ENCODE measurements at regions of chr3 and their contacts with region 1.

Region 1: DNA sequence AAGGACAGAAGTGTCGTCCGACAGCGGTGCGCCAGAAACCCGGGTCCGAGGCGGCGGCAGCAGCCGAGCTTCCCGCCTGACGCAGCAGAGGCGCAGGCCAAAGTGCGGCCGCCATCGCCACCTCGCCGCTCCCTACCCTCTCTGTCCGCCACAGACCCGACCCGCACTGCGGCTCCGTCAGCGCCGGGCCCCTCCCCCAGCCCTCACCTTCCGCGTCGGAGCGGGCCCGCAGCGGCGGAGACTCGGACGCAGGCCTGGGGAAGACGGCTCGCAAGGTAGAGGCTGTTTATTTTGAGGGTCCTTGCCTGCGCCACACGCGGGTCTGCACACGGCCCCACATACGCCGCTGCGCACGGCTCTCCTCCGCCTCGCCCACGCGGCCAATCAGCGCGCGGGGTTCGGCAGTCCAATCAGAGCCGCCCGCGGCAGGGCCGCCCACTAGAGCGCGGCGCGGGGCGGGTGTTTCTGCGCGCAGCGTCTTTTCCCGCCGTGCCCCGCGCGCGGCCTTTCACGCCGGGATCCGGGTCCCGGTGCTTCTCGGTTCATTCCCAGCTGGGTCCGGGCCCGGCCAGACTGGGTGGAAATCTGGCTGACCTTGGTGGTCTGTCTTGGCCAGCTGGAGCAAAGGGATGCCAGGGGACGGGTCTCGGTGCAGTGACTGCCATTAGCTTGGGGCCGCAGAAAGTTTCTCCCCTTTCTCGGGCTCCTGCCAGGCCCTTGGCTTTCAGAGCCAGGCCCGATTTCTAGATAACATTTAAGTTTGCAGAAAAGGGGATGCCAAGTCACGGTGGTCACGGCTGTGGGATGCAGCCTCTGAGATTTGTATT is at the start of gene CNBP:
- DNase-seq: peak; percentile 91 to 95 (median 92)
- ATAC-seq: peak; percentile 95
- H3K4me3 ChIP-seq: peak within 1 kb of the TSS; percentile 73
- H3K27ac ChIP-seq: peak within 1 kb of the TSS; percentile 99
- H3K4me1 ChIP-seq: peaks cover 15 to 16% of the 10 kb centered on the region in 2 experiments; a peak in 4 of 5 replicates
- H3K27me3 ChIP-seq: no peaks in the 10 kb centered on the region
- CTCF ChIP-seq: no peak
- EP300 ChIP-seq: no peak
- POLR2A ChIP-seq: peak; percentile 97
- RAD21 ChIP-seq: no peak
- polyA plus RNA-seq, gene CNBP: 708 to 717 TPM

Region 2: DNA sequence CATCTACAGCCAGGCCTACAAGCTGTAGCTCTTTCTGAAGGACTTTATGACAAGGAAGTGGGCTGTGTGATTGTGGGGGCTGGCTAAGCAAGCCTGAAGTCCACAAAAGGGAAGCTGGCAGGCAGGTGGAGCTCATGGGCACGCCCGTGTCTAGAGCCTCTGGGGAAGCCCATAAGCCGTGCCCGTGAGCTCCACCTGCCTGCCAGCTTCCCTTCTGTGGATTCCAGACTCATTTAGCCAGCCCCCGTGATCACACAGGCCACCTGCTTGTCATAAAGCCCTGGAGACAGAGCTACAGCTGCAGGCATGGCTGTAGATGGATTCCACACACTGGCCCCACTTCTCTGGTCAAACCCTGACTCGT is 167.4 kb before region 1 on chr3:
- CTCF ChIA-PET with region 1: no interaction called
- POLR2A ChIA-PET with region 1: no interaction called
- in situ Hi-C with region 1: no loop called
- intact Hi-C with region 1: no loop called
- DNase-seq: no peak
- ATAC-seq: no peak
- H3K4me3 ChIP-seq: no peak overlapping the region
- H3K27ac ChIP-seq: peak overlapping the region; percentile 62
- H3K4me1 ChIP-seq: peaks cover 24 to 36% of the 10 kb centered on the region in 2 experiments
- H3K27me3 ChIP-seq: no peaks in the 10 kb centered on the region
- CTCF ChIP-seq: no peak; a peak in 1 of 6 replicates
- EP300 ChIP-seq: no peak
- POLR2A ChIP-seq: no peak
- RAD21 ChIP-seq: no peak

Region 3: DNA sequence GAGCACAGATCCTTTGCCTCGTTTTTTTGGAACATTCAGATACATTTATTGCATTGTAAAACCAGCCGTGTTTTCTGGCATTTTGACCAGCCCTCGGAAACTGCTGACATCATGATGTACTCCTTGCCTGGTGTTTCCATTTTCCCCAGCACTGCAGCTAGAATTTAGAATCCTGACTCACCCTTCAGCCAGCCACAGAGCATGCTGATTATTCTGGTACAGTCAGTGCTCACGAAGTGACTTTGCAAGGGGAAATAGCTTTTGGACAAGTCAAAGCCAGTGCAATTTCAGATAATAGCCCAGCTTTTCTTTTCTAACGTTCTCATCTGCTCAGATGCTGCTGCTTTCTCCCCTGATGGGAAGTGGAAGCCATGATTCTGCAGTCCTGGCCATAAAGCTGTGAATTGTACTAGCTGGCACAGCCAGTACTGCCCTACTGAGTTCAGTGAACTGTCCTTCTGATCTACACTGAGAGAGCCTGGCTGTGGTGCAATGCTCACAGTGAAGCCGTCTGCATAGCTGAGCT is 12.0 kb after region 1 on chr3:
- CTCF ChIA-PET with region 1: no interaction called
- POLR2A ChIA-PET with region 1: interaction called, 15 read pairs
- in situ Hi-C with region 1: no loop called
- intact Hi-C with region 1: no loop called
- DNase-seq: peak in 2 of 4 experiments; percentile 52 to 67
- ATAC-seq: peak; percentile 94
- H3K4me3 ChIP-seq: no peak overlapping the region
- H3K27ac ChIP-seq: peak overlapping the region; percentile 47; the same call in 2 of the 3 replicates
- H3K4me1 ChIP-seq: peaks cover 3 to 9% of the 10 kb centered on the region in 2 experiments; a peak in 3 of 5 replicates
- H3K27me3 ChIP-seq: no peaks in the 10 kb centered on the region
- CTCF ChIP-seq: no peak
- EP300 ChIP-seq: no peak
- POLR2A ChIP-seq: no peak
- RAD21 ChIP-seq: no peak

Region 4: DNA sequence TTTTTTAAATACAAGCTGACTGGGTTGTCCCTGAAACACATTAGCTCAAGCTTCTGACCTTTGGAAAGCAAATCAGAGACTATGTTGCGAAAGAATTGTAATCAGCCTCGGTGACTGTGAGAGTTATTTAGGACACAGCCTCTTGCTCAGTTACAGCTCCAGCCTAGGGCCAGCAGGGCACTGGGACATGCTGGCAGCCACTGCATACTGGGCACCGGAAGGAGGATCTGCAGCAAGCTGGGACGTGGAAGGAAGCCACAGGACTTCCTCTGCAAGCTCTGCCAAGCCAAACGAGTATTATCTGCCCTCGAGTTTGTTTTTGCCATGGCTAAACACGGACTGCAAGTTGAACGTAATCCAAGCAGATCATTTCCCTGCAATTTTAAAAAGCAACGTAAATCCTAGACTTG is 41.2 kb after region 1 on chr3:
- CTCF ChIA-PET with region 1: no interaction called
- POLR2A ChIA-PET with region 1: interaction called, 7 read pairs
- in situ Hi-C with region 1: no loop called
- intact Hi-C with region 1: loop called (anchors 5 kb)
- DNase-seq: no peak
- ATAC-seq: peak; percentile 20; the same call in 1 of the 3 replicates
- H3K4me3 ChIP-seq: no peak overlapping the region
- H3K27ac ChIP-seq: peak overlapping the region; percentile 45; the same call in 1 of the 3 replicates
- H3K4me1 ChIP-seq: peaks cover 24 to 34% of the 10 kb centered on the region in 2 experiments
- H3K27me3 ChIP-seq: no peaks in the 10 kb centered on the region
- CTCF ChIP-seq: no peak
- EP300 ChIP-seq: no peak
- POLR2A ChIP-seq: no peak
- RAD21 ChIP-seq: no peak

Region 5: DNA sequence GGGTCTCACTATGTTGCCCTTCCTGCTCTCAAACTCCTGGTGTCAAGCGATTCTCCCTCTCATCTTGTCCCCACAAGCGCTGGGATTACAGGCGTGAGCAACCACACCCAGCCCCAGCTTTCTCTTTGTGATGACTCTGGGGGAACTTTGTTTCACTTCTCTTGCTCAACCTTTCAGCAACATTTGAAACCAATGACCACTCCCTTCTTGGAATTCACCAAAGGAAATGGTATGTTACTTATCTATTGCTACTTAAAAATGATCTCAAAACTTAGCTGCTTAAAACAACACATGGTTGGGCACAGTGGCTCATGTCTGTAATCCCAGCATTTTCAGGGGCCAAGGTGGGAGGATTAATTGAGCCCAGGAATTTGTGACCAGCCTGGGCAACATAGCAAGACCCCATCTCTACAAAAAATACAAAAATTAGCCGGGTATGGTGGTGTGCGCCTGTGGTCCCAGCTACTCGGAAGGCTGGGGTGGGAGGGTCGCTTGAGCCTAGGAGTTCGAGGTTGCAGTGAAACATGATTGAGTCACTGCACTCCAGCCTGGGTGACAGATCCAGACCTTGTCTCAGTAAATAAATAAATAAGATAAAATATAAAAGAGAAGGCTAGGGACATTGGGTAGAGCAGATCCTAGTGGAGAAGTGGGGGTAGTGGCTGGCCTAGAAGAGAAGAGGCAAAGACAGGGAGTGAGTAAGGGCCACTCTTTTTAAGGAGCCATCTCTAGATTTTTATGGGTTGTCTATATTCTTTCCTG is 55.3 kb after region 1 on chr3:
- CTCF ChIA-PET with region 1: no interaction called
- POLR2A ChIA-PET with region 1: interaction called, 7 read pairs
- in situ Hi-C with region 1: no loop called
- intact Hi-C with region 1: loop called (anchors 2 kb)
- DNase-seq: peak in 3 of 4 experiments; percentile 9 to 75 (median 40)
- ATAC-seq: peak; percentile 87
- H3K4me3 ChIP-seq: 0 out of 2 replicates have a peak overlapping the region, but pooled peaks have one; percentile 4
- H3K27ac ChIP-seq: peak overlapping the region; percentile 67; the same call in 2 of the 3 replicates
- H3K4me1 ChIP-seq: peaks cover 8 to 29% of the 10 kb centered on the region in 2 experiments; a peak in 4 of 5 replicates
- H3K27me3 ChIP-seq: no peaks in the 10 kb centered on the region
- CTCF ChIP-seq: no peak; a peak in 1 of 6 replicates
- EP300 ChIP-seq: peak; percentile 54
- POLR2A ChIP-seq: no peak
- RAD21 ChIP-seq: peak in 1 of 2 experiments; percentile 12; a peak in 2 of 4 replicates